CD4-positive, alpha-beta T cell (primary cell): ENCODE measurements at regions of chr5 and their contacts with region 1.

Region 1: DNA sequence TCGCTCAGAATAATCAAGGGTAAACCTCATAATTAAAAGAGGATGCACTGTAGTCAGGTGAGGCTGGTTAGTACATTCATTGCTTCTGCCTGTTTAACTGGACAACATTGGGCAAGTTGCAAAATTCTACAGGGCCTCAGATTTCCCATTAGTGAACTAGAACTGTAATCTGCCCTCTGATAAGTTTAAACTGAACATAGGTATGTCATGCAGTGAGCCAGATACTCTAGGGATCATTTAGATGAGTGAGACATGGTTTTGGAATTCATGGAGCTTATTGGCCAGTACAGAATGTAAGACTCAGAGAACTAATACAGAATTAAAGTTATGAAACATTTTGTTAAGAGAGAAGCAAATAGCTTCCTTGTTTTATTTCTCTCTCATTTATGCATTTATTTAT is 35.9 kb downstream of the RNF44 start:
- DNase-seq: no peak
- ATAC-seq: no peak
- H3K4me3 ChIP-seq: no peak overlapping the region
- H3K4me3 Mint-ChIP-seq: no peak overlapping the region
- H3K27ac ChIP-seq: no peak overlapping the region
- H3K27ac Mint-ChIP-seq: no peak overlapping the region
- H3K4me1 ChIP-seq: no peaks in the 10 kb centered on the region
- H3K4me1 Mint-ChIP-seq: no peaks in the 10 kb centered on the region
- H3K27me3 ChIP-seq: no peaks in the 10 kb centered on the region
- H3K27me3 Mint-ChIP-seq: no peaks in the 10 kb centered on the region
- CTCF ChIP-seq: no peak

Region 2: GRCh38 chr5:176454724-176455394 is 46.5 kb before region 1 on chr5:
- CTCF ChIA-PET with region 1: no interaction called
- POLR2A ChIA-PET with region 1: no interaction called
- intact Hi-C with region 1: loop called in 1 of 2 experiments (anchors 5 kb)
- DNase-seq: no peak
- ATAC-seq: no peak
- H3K4me3 ChIP-seq: no peak overlapping the region
- H3K4me3 Mint-ChIP-seq: peak overlapping the region; percentile 14
- H3K27ac ChIP-seq: no peak overlapping the region
- H3K27ac Mint-ChIP-seq: no peak overlapping the region
- H3K4me1 ChIP-seq: peaks cover 12% of the 10 kb centered on the region
- H3K4me1 Mint-ChIP-seq: peaks cover 59% of the 10 kb centered on the region
- H3K27me3 ChIP-seq: no peaks in the 10 kb centered on the region
- H3K27me3 Mint-ChIP-seq: no peaks in the 10 kb centered on the region
- CTCF ChIP-seq: no peak

Region 3: DNA sequence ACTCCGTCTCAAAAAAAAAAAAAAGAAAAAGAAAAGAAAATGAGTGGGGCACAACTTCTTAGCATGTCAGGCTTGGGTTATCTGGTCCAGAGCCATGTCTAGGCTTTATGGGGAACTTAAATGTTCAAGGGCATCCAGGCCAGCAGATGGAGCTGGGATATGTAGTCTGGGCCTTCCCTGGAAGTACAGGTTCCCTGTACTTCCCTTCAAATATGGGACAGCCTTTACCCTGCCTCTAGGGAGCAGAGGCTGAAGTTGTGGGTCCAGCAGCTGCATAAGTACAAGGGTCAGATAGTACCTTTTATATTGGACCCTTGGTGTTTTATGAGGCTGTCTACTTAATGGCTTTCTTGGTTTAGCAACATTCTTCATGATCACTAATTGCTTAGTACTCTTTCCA is 11.0 kb before region 1 on chr5:
- CTCF ChIA-PET with region 1: no interaction called
- POLR2A ChIA-PET with region 1: no interaction called
- intact Hi-C with region 1: no loop called
- DNase-seq: no peak
- ATAC-seq: no peak
- H3K4me3 ChIP-seq: no peak overlapping the region
- H3K4me3 Mint-ChIP-seq: no peak overlapping the region
- H3K27ac ChIP-seq: no peak overlapping the region
- H3K27ac Mint-ChIP-seq: no peak overlapping the region
- H3K4me1 ChIP-seq: peaks cover 25% of the 10 kb centered on the region
- H3K4me1 Mint-ChIP-seq: peaks cover 46% of the 10 kb centered on the region
- H3K27me3 ChIP-seq: no peaks in the 10 kb centered on the region
- H3K27me3 Mint-ChIP-seq: no peaks in the 10 kb centered on the region
- CTCF ChIP-seq: no peak

Region 4: DNA sequence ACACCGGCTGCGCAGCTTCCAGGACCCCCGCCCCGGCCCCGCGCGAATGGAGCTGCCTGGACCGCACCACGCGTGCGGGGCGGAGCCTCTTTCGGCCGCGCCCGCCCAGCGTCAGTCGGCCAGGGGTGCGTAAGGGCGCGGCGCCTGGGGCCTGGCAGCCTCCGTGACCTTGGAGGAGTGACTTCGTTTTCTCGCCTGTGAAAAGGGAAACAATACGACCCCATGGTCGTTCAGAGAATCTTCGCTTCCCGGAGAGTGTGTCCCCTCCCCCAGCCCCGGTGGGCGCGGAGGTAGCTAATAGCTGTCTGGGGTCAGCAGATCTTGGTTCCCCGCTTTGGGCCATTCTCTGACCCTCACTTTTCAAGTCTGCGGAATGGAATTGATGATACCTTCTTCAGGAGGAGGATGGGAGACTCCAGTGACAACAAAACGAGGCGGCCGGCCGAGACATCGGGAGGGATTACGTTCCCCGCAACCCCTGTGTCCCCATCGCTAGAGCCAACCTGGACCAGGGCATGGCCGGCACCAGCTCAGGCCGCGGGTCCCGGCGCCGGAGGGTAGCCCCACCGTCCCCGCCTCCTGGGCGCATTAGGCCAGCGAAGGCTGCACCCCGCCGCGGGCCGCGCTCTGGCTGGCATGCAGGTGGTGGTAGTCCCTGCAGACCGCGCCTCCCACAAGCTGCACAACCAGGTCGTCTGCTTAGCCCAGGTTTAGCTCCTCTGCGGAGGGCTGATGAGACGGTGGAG is 42.3 kb after region 1 on chr5:
- CTCF ChIA-PET with region 1: interaction called, 3 read pairs
- POLR2A ChIA-PET with region 1: no interaction called
- intact Hi-C with region 1: loop called in 1 of 2 experiments (anchors 5 kb)
- DNase-seq: peak; percentile 53 to 89 (median 70)
- ATAC-seq: peak; percentile 64
- H3K4me3 ChIP-seq: peak overlapping the region; percentile 76
- H3K4me3 Mint-ChIP-seq: peak overlapping the region; percentile 89
- H3K27ac ChIP-seq: peak overlapping the region; percentile 84 to 87
- H3K27ac Mint-ChIP-seq: peak overlapping the region; percentile 93
- H3K4me1 ChIP-seq: peaks cover 77% of the 10 kb centered on the region
- H3K4me1 Mint-ChIP-seq: peaks cover 80% of the 10 kb centered on the region
- H3K27me3 ChIP-seq: no peaks in the 10 kb centered on the region
- H3K27me3 Mint-ChIP-seq: no peaks in the 10 kb centered on the region
- CTCF ChIP-seq: no peak